IMR-90 (cell line): ENCODE measurements at regions of chr10 and their contacts with region 1.

Region 1: DNA sequence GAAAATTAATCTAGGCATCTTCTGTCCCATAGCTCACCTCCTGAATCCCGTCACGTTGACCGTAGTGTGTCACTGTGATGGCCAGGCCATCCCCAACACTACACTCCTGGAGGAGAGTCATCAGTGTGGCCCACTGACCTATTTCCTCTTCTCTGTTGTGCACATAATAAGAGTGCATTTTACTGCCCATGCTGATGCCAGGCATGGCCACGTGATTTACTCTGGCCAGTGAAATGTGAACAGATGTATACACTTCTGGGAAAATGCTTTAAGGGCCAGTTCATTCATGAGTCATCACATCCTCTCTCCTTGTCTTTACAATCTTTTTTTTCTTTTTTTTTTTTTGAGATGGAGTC is 101.9 kb upstream of the PIP4K2A start:
- DNase-seq: peak; percentile 96
- ATAC-seq: peak; percentile 86
- H3K4me3 ChIP-seq: no peak overlapping the region
- H3K27ac ChIP-seq: peak overlapping the region; percentile 46; the same call in 1 of the 2 replicates
- H3K4me1 ChIP-seq: peaks cover 7% of the 10 kb centered on the region
- H3K27me3 ChIP-seq: no peaks in the 10 kb centered on the region
- CTCF ChIP-seq: no peak
- POLR2A ChIP-seq: no peak
- RAD21 ChIP-seq: no peak

Region 2: GRCh38 chr10:22597138-22597537 is 219.1 kb before region 1 on chr10:
- CTCF ChIA-PET with region 1: no interaction called
- POLR2A ChIA-PET with region 1: no interaction called
- dilution Hi-C with region 1: no loop called
- in situ Hi-C with region 1: loop called (anchors 25 kb)
- intact Hi-C with region 1: loop called (anchors 10 kb)
- DNase-seq: peak; percentile 26
- ATAC-seq: peak; percentile 44
- H3K4me3 ChIP-seq: no peak overlapping the region
- H3K27ac ChIP-seq: no peak overlapping the region
- H3K4me1 ChIP-seq: peaks cover 15% of the 10 kb centered on the region
- H3K27me3 ChIP-seq: no peaks in the 10 kb centered on the region
- CTCF ChIP-seq: no peak
- POLR2A ChIP-seq: no peak
- RAD21 ChIP-seq: no peak

Region 3: GRCh38 chr10:22615819-22616499 is 200.3 kb before region 1 on chr10:
- CTCF ChIA-PET with region 1: interaction called, 3 read pairs
- POLR2A ChIA-PET with region 1: no interaction called
- dilution Hi-C with region 1: no loop called
- in situ Hi-C with region 1: no loop called
- intact Hi-C with region 1: loop called (anchors 5 kb)
- DNase-seq: no peak
- ATAC-seq: no peak
- H3K4me3 ChIP-seq: no peak overlapping the region
- H3K27ac ChIP-seq: no peak overlapping the region
- H3K4me1 ChIP-seq: peaks cover 15% of the 10 kb centered on the region
- H3K27me3 ChIP-seq: no peaks in the 10 kb centered on the region
- CTCF ChIP-seq: no peak
- POLR2A ChIP-seq: no peak
- RAD21 ChIP-seq: no peak

Region 4: DNA sequence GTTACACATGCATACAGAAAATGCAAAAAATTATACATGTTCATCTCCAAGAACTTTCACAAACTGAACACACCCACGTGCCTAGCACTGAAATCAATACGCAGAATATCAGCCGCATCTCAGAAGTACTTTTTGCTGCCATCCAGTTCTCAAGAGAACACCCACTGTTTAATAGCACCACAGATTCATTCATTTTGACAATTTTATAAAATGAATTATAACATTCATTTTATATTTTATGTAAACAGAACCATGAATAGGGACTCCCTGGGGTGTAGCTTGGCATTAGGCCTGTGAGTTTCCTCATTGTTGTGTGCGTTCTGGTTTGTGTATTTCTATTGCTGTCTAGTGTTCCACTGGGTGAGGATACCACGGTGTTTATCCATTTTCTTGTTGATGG is 24.6 kb before region 1 on chr10:
- CTCF ChIA-PET with region 1: no interaction called
- POLR2A ChIA-PET with region 1: no interaction called
- dilution Hi-C with region 1: no loop called
- in situ Hi-C with region 1: no loop called
- intact Hi-C with region 1: no loop called
- DNase-seq: no peak
- ATAC-seq: no peak
- H3K4me3 ChIP-seq: no peak overlapping the region
- H3K27ac ChIP-seq: no peak overlapping the region
- H3K4me1 ChIP-seq: no peaks in the 10 kb centered on the region; the same call in 1 of the 2 replicates
- H3K27me3 ChIP-seq: no peaks in the 10 kb centered on the region
- CTCF ChIP-seq: no peak
- POLR2A ChIP-seq: no peak
- RAD21 ChIP-seq: no peak